SK-N-SH (cell line): ENCODE measurements at regions of chr6 and their contacts with region 1.

Region 1: GRCh38 chr6:136921936-136922684 is at the start of gene SLC35D3:
- DNase-seq: peak; percentile 86
- H3K4me3 ChIP-seq: peak within 1 kb of the TSS; percentile 58 to 59
- H3K27ac ChIP-seq: peak within 1 kb of the TSS in 1 of 2 experiments; percentile 92; a peak in 2 of 4 replicates
- H3K4me1 ChIP-seq: peaks cover 0 to 34% of the 10 kb centered on the region in 2 experiments; a peak in 1 of 4 replicates
- H3K27me3 ChIP-seq: peaks cover 12% of the 10 kb centered on the region; the same call in 1 of the 2 replicates
- CTCF ChIP-seq: no peak
- EP300 ChIP-seq: no peak
- RAD21 ChIP-seq: no peak
- polyA plus RNA-seq, gene SLC35D3: 0.05 and 0.16 TPM in 2 replicates

Region 2: GRCh38 chr6:136866872-136867416 is 55.2 kb before region 1 on chr6:
- CTCF ChIA-PET with region 1: interaction called, 6 read pairs
- POLR2A ChIA-PET with region 1: interaction called, 10 read pairs
- DNase-seq: peak; percentile 12
- H3K4me3 ChIP-seq: no peak overlapping the region
- H3K27ac ChIP-seq: peak overlapping the region in 1 of 2 experiments; percentile 89; a peak in 2 of 4 replicates
- H3K4me1 ChIP-seq: peaks cover 4 to 15% of the 10 kb centered on the region in 2 experiments; a peak in 3 of 4 replicates
- H3K27me3 ChIP-seq: no peaks in the 10 kb centered on the region
- CTCF ChIP-seq: no peak
- EP300 ChIP-seq: no peak
- RAD21 ChIP-seq: no peak

Region 3: DNA sequence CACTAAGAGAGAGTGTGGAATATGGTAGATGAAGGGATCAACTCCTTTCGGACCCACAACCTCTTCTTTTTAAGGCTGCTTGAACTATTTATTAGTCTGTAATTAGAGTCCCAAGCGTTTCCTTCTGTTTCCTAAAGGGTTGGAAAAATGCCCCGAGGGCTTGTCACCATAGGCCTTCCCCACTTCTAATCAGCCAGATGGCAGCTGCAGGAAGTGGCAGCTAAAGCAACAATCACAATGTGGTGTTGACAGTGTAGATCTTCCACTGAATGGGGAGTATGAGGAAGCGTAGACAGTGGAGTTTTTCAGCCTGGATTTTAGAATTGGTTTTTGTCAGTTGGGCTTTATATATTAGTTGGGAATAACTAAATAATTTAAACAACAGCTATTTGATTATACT is 40.6 kb after region 1 on chr6:
- CTCF ChIA-PET with region 1: interaction called, 4 read pairs
- POLR2A ChIA-PET with region 1: interaction called, 92 read pairs
- DNase-seq: peak; percentile 58
- H3K4me3 ChIP-seq: no peak overlapping the region
- H3K27ac ChIP-seq: peak overlapping the region in 1 of 2 experiments; percentile 86; a peak in 2 of 4 replicates
- H3K4me1 ChIP-seq: peaks cover 0 to 21% of the 10 kb centered on the region in 2 experiments; a peak in 2 of 4 replicates
- H3K27me3 ChIP-seq: no peaks in the 10 kb centered on the region
- CTCF ChIP-seq: no peak
- EP300 ChIP-seq: peak in 1 of 2 experiments; percentile 71; a peak in 1 of 4 replicates
- RAD21 ChIP-seq: no peak

Region 4: GRCh38 chr6:136983687-136984086 is 61.6 kb after region 1 on chr6:
- CTCF ChIA-PET with region 1: interaction called, 8 read pairs
- POLR2A ChIA-PET with region 1: interaction called, 61 read pairs
- DNase-seq: no peak
- H3K4me3 ChIP-seq: no peak overlapping the region
- H3K27ac ChIP-seq: peak overlapping the region in 1 of 2 experiments; percentile 100; a peak in 2 of 4 replicates
- H3K4me1 ChIP-seq: peaks cover 0 to 59% of the 10 kb centered on the region in 2 experiments; a peak in 2 of 4 replicates
- H3K27me3 ChIP-seq: no peaks in the 10 kb centered on the region
- CTCF ChIP-seq: no peak
- EP300 ChIP-seq: peak in 1 of 2 experiments; percentile 83; a peak in 2 of 4 replicates
- RAD21 ChIP-seq: no peak

Region 5: GRCh38 chr6:137019476-137020272 is 97.6 kb after region 1 on chr6:
- CTCF ChIA-PET with region 1: interaction called, 7 read pairs
- POLR2A ChIA-PET with region 1: interaction called, 12 read pairs
- DNase-seq: no peak
- H3K4me3 ChIP-seq: no peak overlapping the region; a peak in 1 of 4 replicates
- H3K27ac ChIP-seq: peak overlapping the region in 1 of 2 experiments; percentile 90; a peak in 2 of 4 replicates
- H3K4me1 ChIP-seq: peaks cover 0 to 9% of the 10 kb centered on the region in 2 experiments; a peak in 2 of 4 replicates
- H3K27me3 ChIP-seq: no peaks in the 10 kb centered on the region
- CTCF ChIP-seq: no peak
- EP300 ChIP-seq: peak in 1 of 2 experiments; percentile 27; a peak in 1 of 4 replicates
- RAD21 ChIP-seq: no peak